Activated CD4-positive, alpha-beta T cell treated with anti-CD3 and anti-CD28 coated beads for 36 hours (primary cell): ENCODE measurements at regions of chrX and their contacts with region 1.

Region 1: DNA sequence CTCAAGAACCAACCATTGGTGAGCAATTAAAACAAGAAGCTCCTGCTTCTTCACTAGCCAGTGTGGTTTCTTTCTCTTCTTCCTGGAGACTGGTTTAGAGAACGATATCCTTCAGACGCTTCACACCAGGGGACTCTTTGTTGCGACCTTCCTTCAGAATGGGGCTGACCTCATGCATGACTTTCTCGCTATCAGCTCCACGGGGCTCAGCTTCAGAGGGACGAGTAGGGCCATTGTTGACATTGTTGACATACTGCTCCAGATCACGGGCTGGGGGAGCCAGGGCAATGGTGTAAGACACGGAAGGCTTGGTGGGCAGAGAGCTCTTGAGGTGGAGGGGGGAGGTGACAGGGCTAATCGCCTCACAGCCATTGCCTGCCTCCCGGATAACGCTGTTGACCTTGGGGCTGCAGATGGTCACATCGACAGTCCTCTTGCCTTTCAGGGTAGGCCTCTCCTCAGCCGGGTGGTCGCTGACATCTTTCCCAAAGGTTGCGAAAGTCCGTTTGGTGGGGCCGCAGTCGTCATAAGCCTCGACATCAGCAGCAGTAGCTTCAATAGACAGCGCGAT is 113.8 kb downstream of the PCDH19 start:
- DNase-seq: no peak
- ATAC-seq: no peak
- H3K4me3 Mint-ChIP-seq: no peak overlapping the region
- H3K27ac Mint-ChIP-seq: no peak overlapping the region
- H3K4me1 Mint-ChIP-seq: no peaks in the 10 kb centered on the region
- H3K27me3 Mint-ChIP-seq: no peaks in the 10 kb centered on the region

Region 2: DNA sequence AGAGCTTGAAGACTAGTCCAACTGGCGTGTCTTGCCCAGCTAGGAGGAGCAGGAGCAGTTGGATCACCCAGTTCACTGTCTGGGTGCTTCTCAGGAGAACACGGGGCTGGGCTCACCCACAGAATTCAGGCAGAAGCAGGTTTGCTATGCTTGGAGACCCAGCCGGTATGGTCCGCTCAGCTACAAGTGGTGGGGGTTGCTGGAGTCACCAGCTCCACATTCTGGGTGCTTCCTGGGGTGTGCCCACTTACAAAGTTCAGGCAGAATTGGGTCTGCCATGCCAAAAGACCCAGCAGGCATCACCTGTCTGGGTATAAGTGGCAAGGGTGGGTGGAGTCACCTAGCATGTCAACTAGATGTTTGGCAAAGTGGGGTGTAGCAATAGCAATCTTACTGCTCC is 948.0 kb before region 1 on chrX:
- CTCF ChIA-PET with region 1: no interaction called
- POLR2A ChIA-PET with region 1: no interaction called
- intact Hi-C with region 1: loop called in 1 of 2 experiments (anchors 5 kb)
- DNase-seq: no peak
- ATAC-seq: no peak
- H3K4me3 Mint-ChIP-seq: no peak overlapping the region
- H3K27ac Mint-ChIP-seq: no peak overlapping the region
- H3K4me1 Mint-ChIP-seq: no peaks in the 10 kb centered on the region
- H3K27me3 Mint-ChIP-seq: no peaks in the 10 kb centered on the region

Region 3: DNA sequence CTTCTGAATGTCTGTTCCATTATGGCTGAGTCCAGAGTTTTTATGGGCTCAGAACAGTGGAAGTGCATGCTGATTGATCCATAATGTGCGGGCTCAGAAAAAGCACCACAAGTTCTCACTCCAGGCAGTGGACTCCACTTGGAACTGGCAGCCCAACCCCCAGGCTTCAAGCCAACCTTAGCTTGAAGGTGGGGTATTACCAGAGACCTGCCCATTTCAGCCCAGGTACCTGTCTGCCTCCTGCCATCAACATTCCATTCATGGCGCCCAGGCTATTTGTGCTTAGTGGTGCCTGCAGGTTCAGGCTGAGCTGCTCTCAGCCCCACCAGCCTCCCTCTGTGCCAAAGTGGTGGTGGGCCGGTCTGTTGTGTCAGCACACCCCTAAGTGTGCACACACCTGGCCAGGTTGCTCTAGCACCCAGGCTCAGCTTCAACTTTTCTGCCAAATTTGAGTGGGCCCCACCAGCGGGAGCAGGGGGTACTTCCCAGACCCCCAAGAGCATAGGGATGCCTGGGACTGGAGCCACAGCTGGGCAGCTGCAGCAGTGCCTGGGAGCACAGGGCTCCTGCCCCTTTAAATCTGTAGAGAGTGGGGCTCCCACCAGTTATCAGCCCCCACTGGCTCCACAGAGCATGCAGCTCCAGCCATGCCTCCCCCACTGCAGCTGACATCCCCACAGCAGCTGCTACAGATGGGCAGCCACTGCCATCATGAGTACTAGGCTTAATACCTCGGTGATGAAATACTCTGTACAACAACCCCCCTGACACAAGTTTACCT is 911.5 kb before region 1 on chrX:
- CTCF ChIA-PET with region 1: no interaction called
- POLR2A ChIA-PET with region 1: no interaction called
- intact Hi-C with region 1: no loop called
- DNase-seq: no peak
- ATAC-seq: no peak
- H3K4me3 Mint-ChIP-seq: no peak overlapping the region
- H3K27ac Mint-ChIP-seq: no peak overlapping the region
- H3K4me1 Mint-ChIP-seq: no peaks in the 10 kb centered on the region
- H3K27me3 Mint-ChIP-seq: no peaks in the 10 kb centered on the region

Region 4: GRCh38 chrX:100204534-100204933 is 91.7 kb before region 1 on chrX:
- CTCF ChIA-PET with region 1: no interaction called
- POLR2A ChIA-PET with region 1: no interaction called
- intact Hi-C with region 1: no loop called
- DNase-seq: no peak
- ATAC-seq: no peak
- H3K4me3 Mint-ChIP-seq: no peak overlapping the region
- H3K27ac Mint-ChIP-seq: no peak overlapping the region
- H3K4me1 Mint-ChIP-seq: no peaks in the 10 kb centered on the region
- H3K27me3 Mint-ChIP-seq: no peaks in the 10 kb centered on the region